Caco-2 (cell line): ENCODE measurements at regions of chr5 and their contacts with region 1.

Region 1: GRCh38 chr5:39520232-39520572 is 95.4 kb upstream of the DAB2 start:
- DNase-seq: no peak
- H3K4me3 ChIP-seq: no peak overlapping the region
- H3K4me3 Mint-ChIP-seq: no peak overlapping the region
- H3K27ac Mint-ChIP-seq: no peak overlapping the region
- H3K4me1 ChIP-seq: peaks cover 35% of the 10 kb centered on the region
- H3K4me1 Mint-ChIP-seq: peaks cover 7% of the 10 kb centered on the region
- H3K27me3 ChIP-seq: no peaks in the 10 kb centered on the region
- H3K27me3 Mint-ChIP-seq: no peaks in the 10 kb centered on the region
- CTCF ChIP-seq: no peak

Region 2: DNA sequence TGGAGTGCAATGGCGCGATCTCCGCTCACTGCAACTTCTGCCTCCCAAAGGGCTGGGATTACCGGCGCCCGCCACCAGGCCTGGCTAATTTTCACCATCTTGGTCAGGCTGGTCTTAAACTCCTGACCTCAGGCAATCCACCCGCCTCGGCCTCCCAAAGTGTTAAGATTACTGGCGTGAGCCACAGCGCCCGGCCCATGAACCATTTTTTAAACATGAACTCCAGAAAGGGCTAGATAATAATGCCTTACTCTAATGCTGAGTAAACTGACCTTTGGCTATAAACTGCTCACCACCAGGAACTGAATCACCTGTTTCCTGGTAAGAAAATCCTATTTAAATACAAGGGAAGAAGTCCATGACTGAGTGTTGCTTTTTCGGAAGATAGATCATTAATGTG is 72.2 kb before region 1 on chr5:
- CTCF ChIA-PET with region 1: no interaction called
- POLR2A ChIA-PET with region 1: no interaction called
- intact Hi-C with region 1: loop called (anchors 2 kb)
- DNase-seq: peak; percentile 54 to 77
- H3K4me3 ChIP-seq: no peak overlapping the region
- H3K4me3 Mint-ChIP-seq: peak overlapping the region; percentile 31
- H3K27ac Mint-ChIP-seq: peak overlapping the region; percentile 48
- H3K4me1 ChIP-seq: peaks cover 54% of the 10 kb centered on the region
- H3K4me1 Mint-ChIP-seq: peaks cover 13% of the 10 kb centered on the region
- H3K27me3 ChIP-seq: no peaks in the 10 kb centered on the region
- H3K27me3 Mint-ChIP-seq: no peaks in the 10 kb centered on the region
- CTCF ChIP-seq: no peak

Region 3: DNA sequence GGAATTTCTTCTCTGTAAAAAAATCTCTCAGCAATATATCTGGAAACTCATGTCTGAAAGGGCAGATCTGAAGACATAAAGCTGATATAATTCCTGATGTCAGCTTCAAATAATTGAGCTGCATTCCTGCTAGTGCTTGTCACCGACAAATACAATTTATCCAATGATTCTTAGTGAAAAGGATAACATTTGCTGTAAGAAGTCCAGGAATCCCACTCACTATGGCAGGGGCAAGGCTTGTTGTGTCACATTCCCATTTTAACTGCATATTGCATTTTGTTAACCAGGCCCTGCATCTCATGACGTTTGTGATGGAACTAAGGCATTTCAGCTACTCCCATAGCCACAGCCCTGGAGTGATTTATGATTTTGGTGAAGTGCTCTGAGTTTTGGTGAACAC is 64.7 kb after region 1 on chr5:
- CTCF ChIA-PET with region 1: no interaction called
- POLR2A ChIA-PET with region 1: no interaction called
- intact Hi-C with region 1: no loop called
- DNase-seq: no peak
- H3K4me3 ChIP-seq: no peak overlapping the region
- H3K4me3 Mint-ChIP-seq: no peak overlapping the region
- H3K27ac Mint-ChIP-seq: no peak overlapping the region
- H3K4me1 ChIP-seq: peaks cover 4% of the 10 kb centered on the region
- H3K4me1 Mint-ChIP-seq: peaks cover 3% of the 10 kb centered on the region
- H3K27me3 ChIP-seq: no peaks in the 10 kb centered on the region
- H3K27me3 Mint-ChIP-seq: no peaks in the 10 kb centered on the region
- CTCF ChIP-seq: no peak